SK-N-SH (cell line): ENCODE measurements at regions of chr2 and their contacts with region 1.

Region 1: DNA sequence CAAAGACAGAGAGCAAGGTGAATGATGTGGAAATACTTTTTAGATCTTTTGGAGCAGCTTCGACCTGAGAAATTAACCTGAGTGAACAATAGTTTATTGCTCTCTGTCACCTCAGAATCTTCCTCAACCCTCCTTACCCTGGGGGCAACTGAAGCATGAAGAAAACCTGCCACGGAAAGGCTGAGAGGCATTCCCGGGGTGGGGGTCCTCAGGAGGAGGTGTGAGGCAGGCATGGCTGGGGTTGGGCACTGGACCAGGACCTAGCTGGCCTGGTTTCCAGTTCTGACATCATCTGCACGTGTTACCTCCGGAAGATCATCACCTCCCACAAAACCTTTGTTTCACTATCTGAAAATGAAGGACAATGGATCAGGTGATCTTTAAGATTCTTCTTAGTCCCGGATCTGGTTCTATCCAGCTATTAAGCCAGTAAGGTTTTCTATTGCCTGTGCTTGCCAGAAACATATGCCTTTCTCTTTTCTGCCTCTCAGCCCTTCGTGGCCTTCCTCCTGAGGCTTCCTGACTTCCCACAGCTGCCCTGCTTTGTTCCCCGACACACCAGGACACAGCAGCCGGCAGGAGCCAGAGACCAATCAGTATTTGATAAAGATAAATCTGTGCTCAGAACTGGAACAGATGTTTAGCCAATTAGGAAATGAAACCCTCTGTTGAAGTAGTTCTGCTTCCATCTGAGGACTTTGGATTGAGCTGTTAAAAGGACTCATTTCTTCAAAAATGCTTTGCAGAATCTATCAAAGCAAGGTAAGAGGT is 232.5 kb downstream of the TDRD15 start:
- DNase-seq: peak; percentile 77
- H3K4me3 ChIP-seq: no peak overlapping the region
- H3K27ac ChIP-seq: peak overlapping the region in 1 of 2 experiments; percentile 67; a peak in 2 of 4 replicates
- H3K4me1 ChIP-seq: peaks cover 0 to 14% of the 10 kb centered on the region in 2 experiments; a peak in 2 of 4 replicates
- H3K27me3 ChIP-seq: no peaks in the 10 kb centered on the region
- CTCF ChIP-seq: no peak
- EP300 ChIP-seq: peak in 1 of 2 experiments; percentile 66; a peak in 1 of 4 replicates
- RAD21 ChIP-seq: peak; percentile 41

Region 2: GRCh38 chr2:21291426-21291825 is 64.8 kb before region 1 on chr2:
- CTCF ChIA-PET with region 1: no interaction called
- POLR2A ChIA-PET with region 1: no interaction called
- DNase-seq: no peak
- H3K4me3 ChIP-seq: no peak overlapping the region
- H3K27ac ChIP-seq: no peak overlapping the region
- H3K4me1 ChIP-seq: peaks cover 0 to 30% of the 10 kb centered on the region in 2 experiments; a peak in 2 of 4 replicates
- H3K27me3 ChIP-seq: no peaks in the 10 kb centered on the region
- CTCF ChIP-seq: no peak
- EP300 ChIP-seq: no peak
- RAD21 ChIP-seq: no peak

Region 3: GRCh38 chr2:21372654-21373053 is 16.4 kb after region 1 on chr2:
- CTCF ChIA-PET with region 1: interaction called, 17 read pairs
- POLR2A ChIA-PET with region 1: no interaction called
- DNase-seq: peak; percentile 26
- H3K4me3 ChIP-seq: peak overlapping the region in 1 of 2 experiments; percentile 46; a peak in 1 of 4 replicates
- H3K27ac ChIP-seq: no peak overlapping the region
- H3K4me1 ChIP-seq: no peaks in the 10 kb centered on the region
- H3K27me3 ChIP-seq: no peaks in the 10 kb centered on the region
- CTCF ChIP-seq: peak; percentile 16; the same call in 1 of the 2 replicates
- EP300 ChIP-seq: no peak
- RAD21 ChIP-seq: peak; percentile 64

Region 4: DNA sequence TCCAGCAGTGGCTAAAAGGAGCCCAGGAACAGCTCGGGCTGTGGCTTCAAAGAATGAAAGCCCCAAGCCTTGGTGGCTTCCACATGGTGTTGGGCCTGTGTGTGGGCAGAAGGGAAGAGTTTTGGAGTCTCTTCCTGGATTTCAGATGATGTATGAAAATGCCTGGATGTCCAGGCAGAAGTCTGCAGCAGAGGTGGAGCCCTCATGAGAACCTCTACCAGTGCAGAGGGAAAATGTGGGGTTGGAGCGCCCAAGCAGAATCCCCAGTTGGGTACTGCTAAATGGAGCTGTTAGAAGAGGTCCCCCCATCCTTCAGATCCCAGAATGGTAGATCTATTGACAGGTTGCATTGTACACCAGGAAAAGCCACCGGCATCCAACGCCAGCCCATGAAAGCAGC is 179.6 kb after region 1 on chr2:
- CTCF ChIA-PET with region 1: no interaction called
- POLR2A ChIA-PET with region 1: no interaction called
- DNase-seq: no peak
- H3K4me3 ChIP-seq: no peak overlapping the region; a peak in 1 of 4 replicates
- H3K27ac ChIP-seq: no peak overlapping the region
- H3K4me1 ChIP-seq: no peaks in the 10 kb centered on the region
- H3K27me3 ChIP-seq: no peaks in the 10 kb centered on the region
- CTCF ChIP-seq: no peak
- EP300 ChIP-seq: no peak
- RAD21 ChIP-seq: no peak